Dendritic cell treated with granulocyte-macrophage colony-stimulating factor and Interleukin-4, amounts not matched to agents 40 ng/mL and 50 ng/mL, for 4 days (primary cell): ENCODE measurements at regions of chr3 and their contacts with region 1.

Region 1: DNA sequence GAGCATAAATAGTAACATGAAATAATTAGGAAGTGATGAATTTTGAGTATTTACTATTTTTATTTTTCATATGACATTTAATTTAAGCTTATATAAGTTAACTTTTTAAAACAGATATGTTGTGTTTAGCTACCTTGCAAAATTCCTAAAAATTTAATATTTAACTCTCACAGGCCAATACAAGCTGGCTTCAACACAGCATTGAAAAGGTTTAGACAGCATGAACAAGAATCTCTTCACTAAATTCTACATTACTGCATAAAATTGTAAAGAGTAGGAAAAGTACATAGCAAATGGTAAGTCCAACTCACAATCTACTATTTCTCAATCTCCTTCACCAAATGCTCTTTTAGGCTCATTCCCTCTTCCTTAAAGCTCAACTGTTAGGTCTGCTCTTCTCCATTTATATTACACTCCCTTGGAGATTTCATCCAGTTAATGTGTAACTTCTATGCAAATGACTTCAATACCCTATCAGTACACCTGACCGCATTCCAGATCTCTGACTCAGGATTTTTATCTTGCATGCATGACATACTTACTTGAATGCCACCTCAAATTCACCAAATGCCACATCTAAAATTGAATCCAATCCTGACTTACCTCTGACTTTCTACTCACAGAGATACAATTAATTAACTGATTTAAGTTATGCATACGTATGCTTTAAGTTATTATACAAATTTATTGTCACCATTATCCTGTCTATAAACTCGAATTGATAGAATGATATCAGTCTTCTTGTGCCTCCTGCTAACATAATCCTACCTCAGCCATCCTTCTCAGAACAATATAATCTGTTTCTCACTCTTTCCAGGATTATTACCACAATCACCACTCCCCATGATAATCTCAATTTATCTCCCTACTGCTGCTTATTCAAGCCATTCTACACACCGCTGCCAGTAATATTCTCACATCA is 127.0 kb downstream of the STAG1 start:
- H3K4me3 Mint-ChIP-seq: no peak overlapping the region
- H3K27ac Mint-ChIP-seq: peak overlapping the region; percentile 34
- H3K4me1 Mint-ChIP-seq: peaks cover 41% of the 10 kb centered on the region
- H3K27me3 Mint-ChIP-seq: no peaks in the 10 kb centered on the region

Region 2: GRCh38 chr3:136404056-136404455 is 221.1 kb before region 1 on chr3:
- intact Hi-C with region 1: loop called (anchors 10 kb)
- H3K4me3 Mint-ChIP-seq: no peak overlapping the region
- H3K27ac Mint-ChIP-seq: no peak overlapping the region
- H3K4me1 Mint-ChIP-seq: no peaks in the 10 kb centered on the region
- H3K27me3 Mint-ChIP-seq: no peaks in the 10 kb centered on the region

Region 3: GRCh38 chr3:136658946-136659682 is 34.0 kb after region 1 on chr3:
- intact Hi-C with region 1: no loop called
- H3K4me3 Mint-ChIP-seq: no peak overlapping the region
- H3K27ac Mint-ChIP-seq: no peak overlapping the region
- H3K4me1 Mint-ChIP-seq: peaks cover 10% of the 10 kb centered on the region
- H3K27me3 Mint-ChIP-seq: no peaks in the 10 kb centered on the region